ENCODE measurements at regions of chr6 and their contacts with region 1.

Region 1: DNA sequence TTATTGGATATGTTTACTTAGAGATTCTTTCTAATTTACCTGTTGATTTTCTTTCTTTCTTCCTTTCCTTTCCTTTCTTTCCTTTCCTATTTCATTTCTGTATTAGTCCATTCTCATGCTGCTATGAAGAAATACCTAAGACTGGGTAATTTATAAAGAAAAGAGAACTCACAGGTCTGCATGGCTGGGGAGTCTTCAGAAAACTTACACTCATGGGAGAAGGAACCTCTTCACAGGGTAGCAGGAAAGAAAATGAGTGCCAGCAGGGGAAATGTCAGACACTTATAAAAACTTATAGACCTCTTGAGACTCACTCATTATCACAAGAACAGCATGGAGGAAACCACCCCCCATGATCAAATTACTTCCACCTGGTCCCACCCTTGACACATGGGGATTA is 40.8 kb downstream of the HDAC2 start:
- DNase-seq: no peak
- ATAC-seq: no peak
- H3K4me3 ChIP-seq: no peak overlapping the region
- H3K4me3 Mint-ChIP-seq: no peak overlapping the region
- H3K27ac ChIP-seq: no peak overlapping the region
- H3K27ac Mint-ChIP-seq: no peak overlapping the region
- H3K4me1 ChIP-seq: no peaks in the 10 kb centered on the region
- H3K4me1 Mint-ChIP-seq: no peaks in the 10 kb centered on the region
- H3K27me3 ChIP-seq: no peaks in the 10 kb centered on the region
- H3K27me3 Mint-ChIP-seq: peaks cover 8% of the 10 kb centered on the region in 2 donors

Region 2: DNA sequence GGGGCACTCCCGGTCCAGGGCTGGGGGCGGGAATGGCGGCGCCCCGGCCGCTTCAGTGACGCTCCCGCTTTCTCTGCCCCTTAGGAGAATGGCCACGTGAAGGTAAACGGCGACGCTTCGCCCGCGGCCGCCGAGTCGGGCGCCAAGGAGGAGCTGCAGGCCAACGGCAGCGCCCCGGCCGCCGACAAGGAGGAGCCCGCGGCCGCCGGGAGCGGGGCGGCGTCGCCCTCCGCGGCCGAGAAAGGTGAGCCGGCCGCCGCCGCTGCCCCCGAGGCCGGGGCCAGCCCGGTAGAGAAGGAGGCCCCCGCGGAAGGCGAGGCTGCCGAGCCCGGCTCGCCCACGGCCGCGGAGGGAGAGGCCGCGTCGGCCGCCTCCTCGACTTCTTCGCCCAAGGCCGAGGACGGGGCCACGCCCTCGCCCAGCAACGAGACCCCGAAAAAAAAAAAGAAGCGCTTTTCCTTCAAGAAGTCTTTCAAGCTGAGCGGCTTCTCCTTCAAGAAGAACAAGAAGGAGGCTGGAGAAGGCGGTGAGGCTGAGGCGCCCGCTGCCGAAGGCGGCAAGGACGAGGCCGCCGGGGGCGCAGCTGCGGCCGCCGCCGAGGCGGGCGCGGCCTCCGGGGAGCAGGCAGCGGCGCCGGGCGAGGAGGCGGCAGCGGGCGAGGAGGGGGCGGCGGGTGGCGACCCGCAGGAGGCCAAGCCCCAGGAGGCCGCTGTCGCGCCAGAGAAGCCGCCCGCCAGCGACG is 70.4 kb before region 1 on chr6:
- CTCF ChIA-PET with region 1: no interaction called
- POLR2A ChIA-PET with region 1: no interaction called
- DNase-seq: peak in 1 of 35 experiments; percentile 1
- ATAC-seq: no peak
- H3K4me3 ChIP-seq: peak overlapping the region in 1 of 2 donors; percentile 89
- H3K4me3 Mint-ChIP-seq: no peak overlapping the region
- H3K27ac ChIP-seq: no peak overlapping the region
- H3K27ac Mint-ChIP-seq: no peak overlapping the region
- H3K4me1 ChIP-seq: peaks cover 22 to 46% of the 10 kb centered on the region in 2 experiments
- H3K4me1 Mint-ChIP-seq: peaks cover 0 to 24% (median 19%) of the 10 kb centered on the region in 3 donors
- H3K27me3 ChIP-seq: peaks cover 0 to 45% of the 10 kb centered on the region in 2 experiments
- H3K27me3 Mint-ChIP-seq: peaks cover 35 to 38% of the 10 kb centered on the region in 2 donors

Region 3: DNA sequence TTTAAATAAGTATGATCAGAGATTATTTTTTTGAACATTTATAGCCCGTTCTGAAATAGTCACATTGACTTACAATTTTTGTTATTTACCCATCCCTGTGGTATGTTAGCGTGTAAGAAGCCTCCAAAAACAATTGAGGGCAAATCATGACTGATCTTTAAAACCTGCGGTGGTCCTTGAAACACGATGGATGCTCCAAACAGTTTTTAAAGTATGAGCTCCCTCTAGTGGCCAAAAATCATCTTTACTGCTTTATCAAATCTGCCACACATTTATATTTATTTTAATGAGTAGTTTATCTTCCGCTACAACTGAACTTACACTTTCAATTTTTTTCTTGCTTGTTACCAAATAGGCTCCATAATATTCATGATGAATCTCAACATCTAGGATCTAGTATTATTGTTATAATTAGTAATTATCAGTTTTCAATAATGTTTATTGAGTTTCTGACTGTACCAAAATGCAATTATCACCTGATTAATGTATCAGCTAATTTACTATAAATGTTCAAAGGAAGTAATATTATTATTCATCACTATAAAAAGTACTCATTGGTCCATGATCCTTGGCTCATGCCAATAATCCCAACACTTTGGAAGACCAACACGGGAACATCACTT is 20.8 kb before region 1 on chr6:
- CTCF ChIA-PET with region 1: interaction called, 3 to 10 read pairs
- POLR2A ChIA-PET with region 1: no interaction called
- DNase-seq: peak in 3 of 35 experiments; percentile 6 to 66 (median 8)
- ATAC-seq: peak in 1 of 4 experiments; percentile 40
- H3K4me3 ChIP-seq: no peak overlapping the region
- H3K4me3 Mint-ChIP-seq: no peak overlapping the region
- H3K27ac ChIP-seq: no peak overlapping the region
- H3K27ac Mint-ChIP-seq: no peak overlapping the region
- H3K4me1 ChIP-seq: no peaks in the 10 kb centered on the region
- H3K4me1 Mint-ChIP-seq: peaks cover 0 to 5% (median 2%) of the 10 kb centered on the region in 3 donors
- H3K27me3 ChIP-seq: no peaks in the 10 kb centered on the region
- H3K27me3 Mint-ChIP-seq: peaks cover 3 to 5% of the 10 kb centered on the region in 2 donors

Region 4: GRCh38 chr6:113944701-113945100 is 14.5 kb after region 1 on chr6:
- CTCF ChIA-PET with region 1: no interaction called
- POLR2A ChIA-PET with region 1: no interaction called
- DNase-seq: no peak
- ATAC-seq: no peak
- H3K4me3 ChIP-seq: no peak overlapping the region
- H3K4me3 Mint-ChIP-seq: no peak overlapping the region
- H3K27ac ChIP-seq: no peak overlapping the region
- H3K27ac Mint-ChIP-seq: no peak overlapping the region
- H3K4me1 ChIP-seq: no peaks in the 10 kb centered on the region
- H3K4me1 Mint-ChIP-seq: no peaks in the 10 kb centered on the region
- H3K27me3 ChIP-seq: no peaks in the 10 kb centered on the region
- H3K27me3 Mint-ChIP-seq: no peaks in the 10 kb centered on the region